Right ventricle myocardium superior (tissue), 1 donor: ENCODE measurements at regions of chr12 and their contacts with region 1.

Region 1: DNA sequence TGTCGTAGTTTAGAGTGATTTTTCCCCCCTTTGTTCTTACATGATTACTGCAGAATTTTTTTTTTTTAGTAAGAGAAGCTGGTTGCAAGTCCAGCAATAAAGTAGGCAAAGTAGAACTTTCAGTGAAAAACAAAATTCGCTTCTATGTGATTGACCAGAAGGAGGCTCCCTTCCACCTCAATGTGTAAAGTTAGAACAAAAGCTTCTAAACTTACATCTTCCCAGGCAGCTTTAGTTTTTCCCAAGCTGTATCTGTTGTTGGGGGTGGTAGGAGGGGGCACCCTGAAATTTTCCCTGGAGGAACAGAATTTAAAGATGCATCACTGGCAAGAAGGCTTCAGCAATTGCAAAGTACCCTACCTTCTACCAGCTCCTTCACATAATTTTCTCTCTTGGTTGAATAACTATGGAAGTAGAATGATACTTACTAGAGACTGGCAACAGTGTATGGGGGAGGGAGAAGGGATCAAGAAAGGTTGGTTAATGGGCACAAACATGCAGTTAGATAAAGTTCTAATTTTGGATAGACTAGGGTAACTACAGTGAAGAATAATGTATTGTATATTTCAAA is 87.3 kb upstream of the E2F7 start:
- DNase-seq: no peak
- ATAC-seq: no peak

Region 2: DNA sequence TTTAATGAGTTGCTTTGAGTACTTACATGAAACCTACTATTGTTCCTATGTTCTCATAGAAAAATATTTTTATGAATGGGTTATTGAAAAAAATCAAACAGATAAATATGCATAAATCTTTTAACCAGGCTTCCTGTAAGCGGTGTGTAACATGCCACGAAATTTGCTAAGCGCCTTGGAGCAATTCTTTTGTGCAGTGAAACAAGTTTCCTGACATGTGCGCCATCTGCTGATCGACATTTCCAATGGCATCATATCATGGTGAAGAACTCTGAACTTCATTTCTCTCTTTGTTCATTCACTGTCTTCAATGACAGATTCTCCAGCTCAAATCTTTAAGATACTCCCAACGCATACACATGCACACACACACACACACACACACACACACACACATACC is 532.4 kb after region 1 on chr12:
- intact Hi-C with region 1: loop called (anchors 5 kb)
- DNase-seq: no peak
- ATAC-seq: peak; percentile 84